Activated CD8-positive, alpha-beta T cell treated with anti-CD3 and anti-CD28 coated beads for 36 hours (primary cell): ENCODE measurements at regions of chr1 and their contacts with region 1.

Region 1: GRCh38 chr1:24391882-24392603 is 21.5 kb downstream of the STPG1 start:
- DNase-seq: peak; percentile 75
- ATAC-seq: peak; percentile 80
- H3K4me3 Mint-ChIP-seq: peak overlapping the region; percentile 59
- H3K27ac Mint-ChIP-seq: peak overlapping the region; percentile 95
- H3K4me1 Mint-ChIP-seq: peaks cover 41% of the 10 kb centered on the region
- H3K27me3 Mint-ChIP-seq: no peaks in the 10 kb centered on the region
- CTCF ChIP-seq: peak; percentile 84

Region 2: GRCh38 chr1:24070821-24071393 is 321.1 kb before region 1 on chr1:
- CTCF ChIA-PET with region 1: interaction called, 15 read pairs
- POLR2A ChIA-PET with region 1: no interaction called
- intact Hi-C with region 1: no loop called
- DNase-seq: peak; percentile 87
- ATAC-seq: peak; percentile 98
- H3K4me3 Mint-ChIP-seq: no peak overlapping the region
- H3K27ac Mint-ChIP-seq: no peak overlapping the region
- H3K4me1 Mint-ChIP-seq: no peaks in the 10 kb centered on the region
- H3K27me3 Mint-ChIP-seq: peaks cover 2% of the 10 kb centered on the region
- CTCF ChIP-seq: peak; percentile 81

Region 3: DNA sequence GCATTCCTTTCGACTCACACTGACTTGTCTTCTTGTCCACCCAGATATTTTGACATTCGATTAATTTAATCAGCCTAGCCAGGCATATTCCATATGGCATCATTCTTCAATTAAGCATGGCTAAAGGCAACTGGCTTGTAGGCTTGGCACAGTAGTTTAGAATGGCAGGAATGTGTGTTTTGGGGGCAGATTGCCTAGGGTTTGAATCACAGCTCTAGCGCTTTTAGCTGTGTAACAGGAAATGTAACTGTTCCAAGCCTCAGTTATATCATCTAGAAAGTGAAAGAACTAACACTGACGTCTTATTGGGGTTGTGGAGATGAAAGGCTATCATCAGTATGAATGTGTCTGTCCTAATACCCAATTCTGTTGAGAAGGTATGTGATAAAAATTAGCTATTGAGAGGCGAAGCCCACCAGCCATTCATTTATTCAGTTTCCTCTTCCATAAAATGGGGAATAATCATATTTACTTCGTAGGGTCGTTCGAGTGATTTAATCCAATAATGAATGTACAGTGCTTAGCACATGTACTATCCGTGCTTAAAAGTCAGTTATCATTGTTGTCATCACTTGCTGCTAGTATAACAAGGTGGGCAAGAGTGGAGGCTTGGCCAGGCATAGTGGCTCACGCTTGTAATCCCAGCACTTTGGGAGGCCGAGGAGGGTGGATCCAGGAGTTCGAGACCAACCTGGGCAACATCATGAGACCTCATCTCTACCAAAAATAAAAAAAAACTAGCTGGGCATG is 114.4 kb before region 1 on chr1:
- CTCF ChIA-PET with region 1: interaction called, 19 read pairs
- POLR2A ChIA-PET with region 1: no interaction called
- intact Hi-C with region 1: no loop called
- DNase-seq: peak; percentile 39
- ATAC-seq: peak; percentile 97
- H3K4me3 Mint-ChIP-seq: no peak overlapping the region
- H3K27ac Mint-ChIP-seq: no peak overlapping the region
- H3K4me1 Mint-ChIP-seq: peaks cover 9% of the 10 kb centered on the region
- H3K27me3 Mint-ChIP-seq: peaks cover 26% of the 10 kb centered on the region
- CTCF ChIP-seq: no peak

Region 4: GRCh38 chr1:24373044-24373443 is 19.0 kb before region 1 on chr1:
- CTCF ChIA-PET with region 1: interaction called, 29 read pairs
- POLR2A ChIA-PET with region 1: no interaction called
- intact Hi-C with region 1: no loop called
- DNase-seq: no peak
- ATAC-seq: no peak
- H3K4me3 Mint-ChIP-seq: no peak overlapping the region
- H3K27ac Mint-ChIP-seq: no peak overlapping the region
- H3K4me1 Mint-ChIP-seq: no peaks in the 10 kb centered on the region
- H3K27me3 Mint-ChIP-seq: no peaks in the 10 kb centered on the region
- CTCF ChIP-seq: no peak

Region 5: GRCh38 chr1:24415334-24415909 is 23.4 kb after region 1 on chr1 and contains the start of gene NIPAL3:
- CTCF ChIA-PET with region 1: interaction called, 103 read pairs
- POLR2A ChIA-PET with region 1: interaction called, 4 read pairs
- intact Hi-C with region 1: no loop called
- DNase-seq: peak; percentile 99
- ATAC-seq: peak; percentile 93
- H3K4me3 Mint-ChIP-seq: peak within 1 kb of the TSS; percentile 98
- H3K27ac Mint-ChIP-seq: peak within 1 kb of the TSS; percentile 95
- H3K4me1 Mint-ChIP-seq: peaks cover 47% of the 10 kb centered on the region
- H3K27me3 Mint-ChIP-seq: no peaks in the 10 kb centered on the region
- CTCF ChIP-seq: peak; percentile 82
- total RNA-seq, gene NIPAL3: 33.2 to 33.3 TPM

Region 6: DNA sequence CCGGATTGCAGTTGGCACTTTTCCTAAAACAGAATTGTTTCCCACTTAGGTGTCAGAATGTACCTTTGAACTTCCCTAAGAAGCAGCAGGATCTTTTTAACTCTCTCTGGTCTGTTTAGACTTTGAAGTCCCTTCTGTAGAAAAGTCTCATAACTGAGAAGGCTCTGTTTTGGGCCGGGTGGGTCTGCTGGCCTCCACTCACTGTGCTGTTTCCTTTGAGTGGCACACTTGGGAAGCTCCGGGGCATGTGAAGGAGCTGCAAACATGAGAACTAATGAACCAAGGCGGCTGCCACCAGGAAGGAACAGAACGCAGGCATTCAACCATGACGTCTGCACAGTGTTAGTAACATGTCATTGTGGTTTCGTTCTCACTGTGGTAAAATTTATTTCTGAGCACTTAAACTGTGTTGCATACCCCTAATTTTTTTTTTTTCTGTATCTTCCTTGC is 144.4 kb after region 1 on chr1:
- CTCF ChIA-PET with region 1: interaction called, 15 read pairs
- POLR2A ChIA-PET with region 1: interaction called, 5 read pairs
- intact Hi-C with region 1: no loop called
- DNase-seq: peak; percentile 84
- ATAC-seq: peak; percentile 61
- H3K4me3 Mint-ChIP-seq: peak overlapping the region; percentile 72
- H3K27ac Mint-ChIP-seq: peak overlapping the region; percentile 98
- H3K4me1 Mint-ChIP-seq: peaks cover 71% of the 10 kb centered on the region
- H3K27me3 Mint-ChIP-seq: no peaks in the 10 kb centered on the region
- CTCF ChIP-seq: no peak